SK-N-SH (cell line): ENCODE measurements at regions of chr12 and their contacts with region 1.

Region 1: DNA sequence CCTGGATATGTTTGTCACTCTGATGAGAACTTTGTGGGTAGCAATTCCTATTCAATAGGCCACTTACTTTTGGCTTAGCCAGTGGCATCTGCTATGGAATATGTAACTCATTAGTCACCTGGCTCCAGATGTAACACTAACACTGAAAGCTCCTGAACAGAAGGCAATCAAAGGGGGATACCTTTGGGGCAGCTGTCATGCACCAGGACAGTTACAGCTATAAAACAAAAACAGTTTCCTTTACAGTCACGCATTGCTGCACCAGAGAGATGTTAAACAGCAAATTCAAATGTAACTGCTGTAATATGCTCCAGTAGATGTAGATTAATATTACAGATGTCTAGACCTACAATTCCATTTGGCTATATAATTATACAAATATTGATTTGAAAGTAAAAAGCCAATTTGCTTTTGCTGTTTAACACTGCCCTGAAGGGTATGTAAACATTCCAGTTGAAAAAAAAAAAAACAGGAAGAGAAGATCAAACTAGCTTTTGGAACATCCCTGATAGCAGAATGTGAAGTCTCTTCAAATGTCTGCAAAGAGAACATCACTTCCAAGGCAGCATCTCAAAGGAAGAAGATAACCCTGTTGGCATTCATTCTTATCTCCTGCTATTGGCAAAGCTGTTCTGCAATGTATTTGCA is 18.4 kb downstream of the RACGAP1 start:
- DNase-seq: no peak
- H3K4me3 ChIP-seq: no peak overlapping the region
- H3K27ac ChIP-seq: peak overlapping the region; percentile 3 to 87; a peak in 3 of 4 replicates
- H3K4me1 ChIP-seq: peaks cover 6 to 41% of the 10 kb centered on the region in 2 experiments; a peak in 2 of 4 replicates
- H3K27me3 ChIP-seq: no peaks in the 10 kb centered on the region
- CTCF ChIP-seq: no peak
- EP300 ChIP-seq: peak in 1 of 2 experiments; percentile 80; a peak in 2 of 4 replicates
- RAD21 ChIP-seq: no peak

Region 2: GRCh38 chr12:49489720-49490119 is 517.2 kb before region 1 on chr12:
- CTCF ChIA-PET with region 1: no interaction called
- POLR2A ChIA-PET with region 1: no interaction called
- DNase-seq: no peak
- H3K4me3 ChIP-seq: no peak overlapping the region
- H3K27ac ChIP-seq: peak overlapping the region; percentile 61 to 90; a peak in 3 of 4 replicates
- H3K4me1 ChIP-seq: peaks cover 0 to 34% of the 10 kb centered on the region in 2 experiments; a peak in 2 of 4 replicates
- H3K27me3 ChIP-seq: no peaks in the 10 kb centered on the region
- CTCF ChIP-seq: peak; percentile 45
- EP300 ChIP-seq: peak in 1 of 2 experiments; percentile 93; a peak in 2 of 4 replicates
- RAD21 ChIP-seq: no peak

Region 3: DNA sequence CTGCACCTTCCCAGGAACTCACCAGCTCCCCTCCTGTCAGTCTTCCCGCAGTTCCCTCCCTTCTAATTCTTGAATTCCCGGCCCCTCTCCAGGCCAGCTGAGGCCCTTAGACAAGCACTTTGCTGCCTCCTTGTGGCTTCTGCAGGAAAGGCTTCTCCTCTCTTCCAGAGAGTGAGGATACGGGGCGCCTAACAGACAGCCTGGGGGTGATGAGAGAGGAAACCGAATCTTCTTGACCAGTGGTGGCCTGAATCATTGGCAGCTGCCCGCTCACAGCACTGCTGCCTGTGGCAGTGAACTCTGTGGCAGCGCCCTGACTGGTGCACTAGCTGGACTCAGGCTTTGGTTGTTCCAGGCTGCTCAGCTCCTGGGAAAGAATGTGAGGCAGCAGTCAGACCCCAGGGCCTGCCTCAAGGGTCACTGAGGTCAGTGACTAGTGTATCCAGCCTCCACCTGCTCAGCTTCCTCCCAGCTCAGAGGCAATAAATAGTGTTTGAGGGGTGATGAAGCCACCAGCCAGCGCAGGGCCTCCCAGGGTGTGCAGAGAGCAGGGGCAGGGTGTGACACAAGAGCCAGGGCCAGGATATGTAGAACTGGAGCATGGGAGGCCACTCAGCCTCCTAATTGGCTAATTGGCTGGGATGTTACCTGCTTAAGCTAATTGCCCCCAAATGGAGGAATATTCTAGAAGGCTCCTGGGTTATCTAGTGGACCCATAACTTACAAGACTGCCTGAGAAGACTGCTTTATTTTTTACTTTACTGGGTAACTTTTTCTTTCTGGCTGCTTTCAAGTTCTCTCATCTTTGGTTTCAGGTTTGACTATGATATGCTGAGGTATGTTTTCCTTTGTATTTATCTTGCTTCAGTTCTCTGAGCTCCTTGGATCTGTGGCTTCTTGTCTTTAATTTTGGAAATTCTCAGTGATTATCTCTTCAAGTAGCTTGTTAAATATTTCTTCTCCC is 426.1 kb before region 1 on chr12:
- CTCF ChIA-PET with region 1: no interaction called
- POLR2A ChIA-PET with region 1: no interaction called
- DNase-seq: peak; percentile 83
- H3K4me3 ChIP-seq: no peak overlapping the region; a peak in 1 of 4 replicates
- H3K27ac ChIP-seq: no peak overlapping the region; a peak in 1 of 4 replicates
- H3K4me1 ChIP-seq: peaks cover 0 to 18% of the 10 kb centered on the region in 2 experiments; a peak in 1 of 4 replicates
- H3K27me3 ChIP-seq: no peaks in the 10 kb centered on the region
- CTCF ChIP-seq: peak; percentile 88
- EP300 ChIP-seq: no peak; a peak in 1 of 4 replicates
- RAD21 ChIP-seq: peak; percentile 82

Region 4: GRCh38 chr12:49800421-49801140 is 206.3 kb before region 1 on chr12:
- CTCF ChIA-PET with region 1: no interaction called
- POLR2A ChIA-PET with region 1: no interaction called
- DNase-seq: no peak
- H3K4me3 ChIP-seq: no peak overlapping the region
- H3K27ac ChIP-seq: no peak overlapping the region
- H3K4me1 ChIP-seq: no peaks in the 10 kb centered on the region
- H3K27me3 ChIP-seq: no peaks in the 10 kb centered on the region
- CTCF ChIP-seq: no peak
- EP300 ChIP-seq: no peak
- RAD21 ChIP-seq: no peak

Region 5: GRCh38 chr12:49942921-49943624 is 63.8 kb before region 1 on chr12:
- CTCF ChIA-PET with region 1: no interaction called
- POLR2A ChIA-PET with region 1: no interaction called
- DNase-seq: no peak
- H3K4me3 ChIP-seq: no peak overlapping the region
- H3K27ac ChIP-seq: no peak overlapping the region
- H3K4me1 ChIP-seq: peaks cover 0 to 4% of the 10 kb centered on the region in 2 experiments; a peak in 1 of 4 replicates
- H3K27me3 ChIP-seq: no peaks in the 10 kb centered on the region
- CTCF ChIP-seq: no peak
- EP300 ChIP-seq: no peak
- RAD21 ChIP-seq: no peak

Region 6: DNA sequence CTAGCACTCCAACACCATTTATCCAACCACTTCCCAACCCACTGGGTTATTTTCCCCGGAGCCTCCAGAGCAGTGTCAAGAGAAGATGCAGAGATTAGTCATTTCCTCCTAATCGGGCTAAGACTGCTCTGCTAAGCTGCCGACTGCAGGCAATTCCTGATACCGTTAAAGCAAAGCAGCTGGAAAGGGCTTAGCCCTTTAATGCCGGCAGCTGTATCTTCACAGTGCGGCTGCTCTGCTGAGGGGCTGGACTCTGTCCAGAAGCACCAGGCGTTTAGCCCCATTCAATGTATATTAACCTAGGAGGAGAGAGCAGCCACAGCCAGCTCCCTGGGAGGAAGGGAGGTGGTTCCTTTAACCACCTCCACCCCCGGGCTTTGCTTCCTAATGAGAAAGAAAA is 23.0 kb before region 1 on chr12:
- CTCF ChIA-PET with region 1: interaction called, 19 read pairs
- POLR2A ChIA-PET with region 1: interaction called, 8 read pairs
- DNase-seq: peak; percentile 62
- H3K4me3 ChIP-seq: no peak overlapping the region
- H3K27ac ChIP-seq: peak overlapping the region; percentile 70 to 99
- H3K4me1 ChIP-seq: peaks cover 20 to 80% of the 10 kb centered on the region in 2 experiments
- H3K27me3 ChIP-seq: no peaks in the 10 kb centered on the region
- CTCF ChIP-seq: no peak
- EP300 ChIP-seq: peak in 1 of 2 experiments; percentile 87; a peak in 2 of 4 replicates
- RAD21 ChIP-seq: peak; percentile 24